Activated CD4-positive, alpha-beta T cell treated with anti-CD3 and anti-CD28 coated beads for 36 hours (primary cell): ENCODE measurements at regions of chr7 and their contacts with region 1.

Region 1: DNA sequence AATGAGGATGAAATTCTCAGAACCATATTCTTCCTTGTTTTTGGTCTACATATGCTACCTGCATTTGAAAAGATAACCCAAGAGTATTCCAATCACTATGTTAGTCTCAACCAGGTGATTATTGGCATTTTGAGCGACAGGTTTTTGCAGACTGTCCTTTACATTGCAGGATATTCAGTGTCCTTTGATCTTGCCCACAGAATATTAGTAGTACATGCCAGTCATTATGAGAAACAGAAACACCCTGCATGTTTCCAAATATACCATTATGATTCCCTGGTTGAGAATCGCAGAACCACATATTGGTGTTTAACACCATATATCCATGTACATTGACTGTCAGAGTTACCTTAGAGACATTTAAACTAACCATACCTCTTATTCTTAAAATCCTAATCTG is 30.6 kb downstream of the TMEM243 start:
- DNase-seq: no peak
- ATAC-seq: no peak
- H3K4me3 Mint-ChIP-seq: no peak overlapping the region
- H3K27ac Mint-ChIP-seq: no peak overlapping the region
- H3K4me1 Mint-ChIP-seq: peaks cover 26% of the 10 kb centered on the region
- H3K27me3 Mint-ChIP-seq: no peaks in the 10 kb centered on the region

Region 2: DNA sequence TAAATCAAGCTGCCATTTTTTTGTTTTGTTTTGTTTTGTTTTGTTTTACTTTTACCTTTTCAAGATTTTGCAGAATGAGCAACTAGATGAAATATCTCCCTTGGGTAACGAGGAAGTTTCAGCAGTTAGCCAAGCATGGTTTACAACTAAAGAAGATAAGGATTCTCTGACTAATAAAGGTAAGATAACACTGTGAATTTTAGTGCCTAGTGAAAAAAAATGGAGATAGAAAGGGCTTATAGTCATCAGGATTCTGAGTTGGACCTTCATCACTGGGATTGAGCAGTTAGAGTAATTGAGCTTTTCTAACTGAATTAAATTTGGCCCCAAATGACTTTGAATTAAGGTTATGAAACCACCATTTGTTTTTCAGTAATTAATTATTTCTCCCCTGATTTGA is 15.5 kb before region 1 on chr7:
- CTCF ChIA-PET with region 1: interaction called, 14 read pairs
- POLR2A ChIA-PET with region 1: no interaction called
- intact Hi-C with region 1: no loop called
- DNase-seq: no peak
- ATAC-seq: no peak
- H3K4me3 Mint-ChIP-seq: no peak overlapping the region
- H3K27ac Mint-ChIP-seq: no peak overlapping the region
- H3K4me1 Mint-ChIP-seq: peaks cover 16% of the 10 kb centered on the region
- H3K27me3 Mint-ChIP-seq: no peaks in the 10 kb centered on the region

Region 3: GRCh38 chr7:87206361-87206760 is 17.4 kb after region 1 on chr7:
- CTCF ChIA-PET with region 1: no interaction called
- POLR2A ChIA-PET with region 1: no interaction called
- intact Hi-C with region 1: loop called in 1 of 2 experiments (anchors 1 kb)
- DNase-seq: no peak
- ATAC-seq: no peak
- H3K4me3 Mint-ChIP-seq: no peak overlapping the region
- H3K27ac Mint-ChIP-seq: no peak overlapping the region
- H3K4me1 Mint-ChIP-seq: peaks cover 68% of the 10 kb centered on the region
- H3K27me3 Mint-ChIP-seq: no peaks in the 10 kb centered on the region

Region 4: DNA sequence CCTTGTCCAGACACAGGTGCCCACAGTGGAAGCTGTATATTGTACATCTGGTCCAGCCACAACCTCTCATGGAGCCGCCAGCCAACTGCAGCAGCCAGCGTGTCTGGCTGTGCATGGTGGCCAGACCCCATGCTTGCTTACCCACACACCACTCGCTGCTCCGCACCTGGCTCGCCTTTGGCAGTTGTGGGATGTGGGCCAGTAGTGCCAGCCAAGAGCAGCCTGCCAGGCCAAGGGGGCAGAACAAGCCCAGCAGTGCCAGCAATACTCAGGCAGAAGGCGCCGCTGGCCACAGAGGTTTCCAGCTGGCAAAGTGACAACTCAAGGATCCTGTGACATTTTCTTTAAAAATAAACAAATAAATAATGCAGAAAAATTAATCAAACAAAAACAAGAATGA is 42.3 kb after region 1 on chr7:
- CTCF ChIA-PET with region 1: interaction called, 7 read pairs
- POLR2A ChIA-PET with region 1: no interaction called
- intact Hi-C with region 1: loop called in 1 of 2 experiments (anchors 5 kb)
- DNase-seq: no peak
- ATAC-seq: no peak
- H3K4me3 Mint-ChIP-seq: no peak overlapping the region
- H3K27ac Mint-ChIP-seq: no peak overlapping the region
- H3K4me1 Mint-ChIP-seq: peaks cover 9% of the 10 kb centered on the region
- H3K27me3 Mint-ChIP-seq: peaks cover 4% of the 10 kb centered on the region